ENCODE measurements at regions of chr5 and their contacts with region 1.

Region 1: DNA sequence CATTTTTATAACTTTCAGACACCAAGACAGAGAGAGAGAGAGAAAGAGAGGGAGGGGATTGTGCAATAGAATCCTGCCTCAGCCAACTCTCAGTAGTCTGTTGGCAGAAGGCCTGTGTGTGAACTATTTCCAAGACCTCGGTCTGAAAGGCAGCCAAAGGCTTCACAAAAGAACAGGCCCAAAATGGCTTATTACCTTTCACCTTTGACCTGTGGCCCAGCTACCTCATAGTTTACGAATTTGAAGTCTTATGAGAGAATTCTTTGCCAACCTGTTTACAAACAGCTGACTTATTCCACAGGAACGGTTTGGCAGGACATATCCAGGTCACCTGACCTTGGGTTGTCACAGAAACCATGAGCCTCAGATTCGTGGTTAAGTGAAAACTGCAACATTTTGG is 48.6 kb downstream of the NR2F1-AS1 start:
- DNase-seq: peak; percentile 78 to 83
- H3K4me3 ChIP-seq: no peak overlapping the region
- H3K27ac ChIP-seq: no peak overlapping the region
- H3K4me1 ChIP-seq: peaks cover 0 to 18% (median 2%) of the 10 kb centered on the region in 4 donors
- H3K27me3 ChIP-seq: no peaks in the 10 kb centered on the region
- CTCF ChIP-seq: no peak

Region 2: DNA sequence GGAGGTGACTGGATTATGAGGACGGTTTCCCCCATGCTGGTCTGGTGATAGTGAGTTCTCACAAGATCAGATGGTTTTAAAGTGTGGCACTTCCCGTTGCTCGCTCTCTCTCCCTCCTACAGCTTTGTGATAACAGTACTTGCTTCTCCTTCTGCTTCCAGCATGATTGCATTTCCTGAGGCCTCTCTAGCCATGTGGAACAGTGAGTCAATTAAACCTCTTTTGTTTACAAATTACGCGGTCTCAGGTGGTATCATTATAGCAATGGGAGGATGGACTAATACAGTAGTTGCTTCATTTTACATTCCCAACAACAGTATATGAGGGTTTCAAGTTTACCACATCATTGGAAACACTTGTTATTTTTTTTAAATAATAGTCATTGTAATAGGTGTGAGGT is 1211.9 kb before region 1 on chr5:
- intact Hi-C with region 1: loop called (anchors 5 kb)
- DNase-seq: no peak
- H3K4me3 ChIP-seq: no peak overlapping the region
- H3K27ac ChIP-seq: no peak overlapping the region
- H3K4me1 ChIP-seq: no peaks in the 10 kb centered on the region
- H3K27me3 ChIP-seq: no peaks in the 10 kb centered on the region
- CTCF ChIP-seq: no peak